CD8-positive, alpha-beta T cell (primary cell): ENCODE measurements at regions of chr7 and their contacts with region 1.

Region 1: DNA sequence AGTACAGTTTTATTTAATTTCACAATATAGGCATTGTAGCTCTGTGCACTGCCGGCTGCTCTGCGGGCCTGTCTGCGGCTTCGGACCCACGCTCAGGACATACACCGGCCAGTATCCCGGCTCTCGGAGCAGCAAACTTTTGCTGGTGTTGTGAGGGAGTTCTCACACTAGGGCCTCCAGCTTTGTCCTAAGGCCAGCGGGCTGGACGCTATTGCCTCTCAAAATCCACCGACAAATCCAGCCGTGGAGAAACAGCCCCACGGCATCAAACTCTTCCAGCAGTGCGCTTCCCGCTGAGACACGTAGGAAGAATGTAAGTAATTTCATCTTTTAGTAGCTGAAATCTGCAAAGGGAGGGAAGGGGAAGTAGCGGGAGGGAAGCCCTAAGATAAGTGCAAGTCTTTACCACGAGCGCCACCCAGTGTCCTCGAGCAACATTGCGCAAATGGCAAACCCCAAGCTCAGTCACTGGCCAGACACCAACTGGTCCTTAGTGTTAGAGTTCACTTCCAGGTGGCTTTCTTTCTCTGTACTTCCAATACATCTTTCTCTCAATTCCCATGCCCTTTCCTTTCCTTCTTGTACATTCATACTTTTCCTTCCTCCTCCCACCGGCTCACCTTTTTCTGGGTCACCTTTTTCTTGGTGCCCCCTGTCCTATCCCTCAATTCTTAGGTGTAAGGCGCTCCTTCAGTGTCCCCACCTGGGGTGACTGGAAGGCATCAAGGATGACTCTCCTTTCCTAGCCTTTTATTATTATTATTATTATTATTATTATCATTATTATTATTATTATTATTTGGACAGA is 3.0 kb upstream of the DLX5 start:
- DNase-seq: peak; percentile 42 to 78 (median 65)
- ATAC-seq: peak; percentile 64
- H3K4me3 ChIP-seq: peak overlapping the region; percentile 40 to 51
- H3K4me3 Mint-ChIP-seq: peak overlapping the region; percentile 81
- H3K27ac ChIP-seq: no peak overlapping the region
- H3K27ac Mint-ChIP-seq: no peak overlapping the region
- H3K4me1 ChIP-seq: peaks cover 29% of the 10 kb centered on the region
- H3K4me1 Mint-ChIP-seq: peaks cover 35% of the 10 kb centered on the region
- H3K27me3 ChIP-seq: peaks cover 24 to 40% of the 10 kb centered on the region in 2 experiments
- H3K27me3 Mint-ChIP-seq: peaks cover 62% of the 10 kb centered on the region
- CTCF ChIP-seq: peak; percentile 73

Region 2: GRCh38 chr7:95916573-95917297 is 1110.9 kb before region 1 on chr7:
- CTCF ChIA-PET with region 1: interaction called, 59 read pairs
- POLR2A ChIA-PET with region 1: no interaction called
- intact Hi-C with region 1: loop called in 1 of 2 experiments (anchors 1 kb)
- DNase-seq: peak; percentile 48 to 81 (median 68)
- ATAC-seq: no peak
- H3K4me3 ChIP-seq: no peak overlapping the region
- H3K4me3 Mint-ChIP-seq: no peak overlapping the region
- H3K27ac ChIP-seq: no peak overlapping the region
- H3K27ac Mint-ChIP-seq: no peak overlapping the region
- H3K4me1 ChIP-seq: no peaks in the 10 kb centered on the region
- H3K4me1 Mint-ChIP-seq: peaks cover 3% of the 10 kb centered on the region
- H3K27me3 ChIP-seq: no peaks in the 10 kb centered on the region
- H3K27me3 Mint-ChIP-seq: peaks cover 20% of the 10 kb centered on the region
- CTCF ChIP-seq: peak; percentile 93

Region 3: DNA sequence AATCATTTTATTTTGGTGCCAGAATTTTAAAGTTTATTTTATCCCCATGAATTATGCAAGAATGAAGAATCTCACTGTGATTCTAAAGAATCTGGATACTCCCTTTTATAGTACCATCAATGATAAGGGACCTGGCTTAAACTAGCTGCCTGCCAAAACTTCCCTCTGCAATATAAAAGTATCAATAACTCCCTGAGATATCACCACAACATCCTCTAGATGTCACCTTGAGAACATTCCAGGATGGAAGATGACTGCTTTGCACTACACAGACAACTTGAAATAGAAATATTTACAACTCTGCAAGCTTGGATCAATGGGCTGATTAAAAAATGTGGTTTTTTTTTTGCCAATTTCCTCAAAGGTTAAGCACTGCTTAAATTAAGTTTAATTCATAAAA is 847.8 kb before region 1 on chr7:
- CTCF ChIA-PET with region 1: no interaction called
- POLR2A ChIA-PET with region 1: no interaction called
- intact Hi-C with region 1: loop called in 1 of 2 experiments (anchors 5 kb)
- DNase-seq: no peak
- ATAC-seq: no peak
- H3K4me3 ChIP-seq: no peak overlapping the region
- H3K4me3 Mint-ChIP-seq: no peak overlapping the region
- H3K27ac ChIP-seq: no peak overlapping the region
- H3K27ac Mint-ChIP-seq: no peak overlapping the region
- H3K4me1 ChIP-seq: no peaks in the 10 kb centered on the region
- H3K4me1 Mint-ChIP-seq: no peaks in the 10 kb centered on the region
- H3K27me3 ChIP-seq: no peaks in the 10 kb centered on the region
- H3K27me3 Mint-ChIP-seq: no peaks in the 10 kb centered on the region
- CTCF ChIP-seq: no peak

Region 4: GRCh38 chr7:96273716-96274115 is 753.9 kb before region 1 on chr7:
- CTCF ChIA-PET with region 1: no interaction called
- POLR2A ChIA-PET with region 1: no interaction called
- intact Hi-C with region 1: no loop called
- DNase-seq: no peak
- ATAC-seq: no peak
- H3K4me3 ChIP-seq: no peak overlapping the region
- H3K4me3 Mint-ChIP-seq: no peak overlapping the region
- H3K27ac ChIP-seq: no peak overlapping the region
- H3K27ac Mint-ChIP-seq: no peak overlapping the region
- H3K4me1 ChIP-seq: no peaks in the 10 kb centered on the region
- H3K4me1 Mint-ChIP-seq: no peaks in the 10 kb centered on the region
- H3K27me3 ChIP-seq: no peaks in the 10 kb centered on the region
- H3K27me3 Mint-ChIP-seq: no peaks in the 10 kb centered on the region
- CTCF ChIP-seq: no peak

Region 5: GRCh38 chr7:96414931-96415292 is 612.7 kb before region 1 on chr7:
- CTCF ChIA-PET with region 1: interaction called, 4 read pairs
- POLR2A ChIA-PET with region 1: no interaction called
- intact Hi-C with region 1: loop called in 1 of 2 experiments (anchors 1 kb)
- DNase-seq: peak in 4 of 9 experiments; percentile 7 to 52 (median 35)
- ATAC-seq: no peak
- H3K4me3 ChIP-seq: no peak overlapping the region
- H3K4me3 Mint-ChIP-seq: no peak overlapping the region
- H3K27ac ChIP-seq: no peak overlapping the region
- H3K27ac Mint-ChIP-seq: no peak overlapping the region
- H3K4me1 ChIP-seq: no peaks in the 10 kb centered on the region
- H3K4me1 Mint-ChIP-seq: no peaks in the 10 kb centered on the region
- H3K27me3 ChIP-seq: no peaks in the 10 kb centered on the region
- H3K27me3 Mint-ChIP-seq: no peaks in the 10 kb centered on the region
- CTCF ChIP-seq: peak; percentile 31

Region 6: DNA sequence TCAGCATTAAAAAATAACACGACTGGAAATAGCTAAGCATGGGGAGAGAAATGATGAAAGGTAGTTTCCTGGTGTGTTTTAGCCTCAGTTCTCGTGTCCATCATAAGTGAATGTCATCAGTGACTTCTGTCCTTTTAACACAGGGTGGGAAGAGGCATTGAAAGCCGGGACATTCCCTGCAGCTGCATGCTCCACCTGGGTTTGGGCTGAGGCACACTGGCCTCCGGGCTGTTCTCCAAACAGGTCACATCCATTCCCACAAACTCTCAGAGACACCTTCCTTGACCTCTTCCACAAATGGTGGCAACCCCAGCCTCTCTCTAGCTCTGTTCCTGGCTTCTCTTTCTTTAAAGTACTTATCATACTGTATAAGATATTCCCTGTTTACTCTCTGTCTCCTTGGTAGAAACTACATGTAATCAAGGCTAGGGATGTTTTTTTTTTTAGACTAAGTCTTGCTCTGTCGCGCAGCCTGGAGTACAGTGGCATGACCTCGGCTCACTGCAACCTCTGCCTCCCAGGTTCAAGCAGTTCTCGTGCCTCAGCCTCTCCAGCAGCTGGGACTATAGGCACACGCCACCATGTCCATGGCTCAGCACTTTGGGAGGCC is 1350.7 kb after region 1 on chr7:
- CTCF ChIA-PET with region 1: no interaction called
- POLR2A ChIA-PET with region 1: no interaction called
- intact Hi-C with region 1: no loop called
- DNase-seq: no peak
- ATAC-seq: no peak
- H3K4me3 ChIP-seq: no peak overlapping the region
- H3K4me3 Mint-ChIP-seq: no peak overlapping the region
- H3K27ac ChIP-seq: no peak overlapping the region
- H3K27ac Mint-ChIP-seq: peak overlapping the region; percentile 24
- H3K4me1 ChIP-seq: no peaks in the 10 kb centered on the region
- H3K4me1 Mint-ChIP-seq: no peaks in the 10 kb centered on the region
- H3K27me3 ChIP-seq: no peaks in the 10 kb centered on the region
- H3K27me3 Mint-ChIP-seq: no peaks in the 10 kb centered on the region
- CTCF ChIP-seq: no peak